ENCODE measurements at regions of chr12 and their contacts with region 1.

Region 1: GRCh38 chr12:50246873-50247612 is 36.3 kb downstream of the LIMA1 start:
- DNase-seq: peak; percentile 98
- H3K4me3 Mint-ChIP-seq: peak overlapping the region; percentile 30
- H3K27ac Mint-ChIP-seq: peak overlapping the region; percentile 53
- H3K4me1 Mint-ChIP-seq: peaks cover 15% of the 10 kb centered on the region
- H3K27me3 Mint-ChIP-seq: no peaks in the 10 kb centered on the region
- CTCF ChIP-seq: no peak

Region 2: GRCh38 chr12:50257686-50258551 is 10.9 kb after region 1 on chr12:
- CTCF ChIA-PET with region 1: interaction called, 4 read pairs
- POLR2A ChIA-PET with region 1: interaction called, 23 read pairs
- intact Hi-C with region 1: no loop called
- DNase-seq: peak; percentile 56
- H3K4me3 Mint-ChIP-seq: peak overlapping the region; percentile 9
- H3K27ac Mint-ChIP-seq: peak overlapping the region; percentile 84
- H3K4me1 Mint-ChIP-seq: peaks cover 37% of the 10 kb centered on the region
- H3K27me3 Mint-ChIP-seq: no peaks in the 10 kb centered on the region
- CTCF ChIP-seq: no peak